CD8-positive, alpha-beta T cell (primary cell): ENCODE measurements at regions of chr22 and their contacts with region 1.

Region 1: DNA sequence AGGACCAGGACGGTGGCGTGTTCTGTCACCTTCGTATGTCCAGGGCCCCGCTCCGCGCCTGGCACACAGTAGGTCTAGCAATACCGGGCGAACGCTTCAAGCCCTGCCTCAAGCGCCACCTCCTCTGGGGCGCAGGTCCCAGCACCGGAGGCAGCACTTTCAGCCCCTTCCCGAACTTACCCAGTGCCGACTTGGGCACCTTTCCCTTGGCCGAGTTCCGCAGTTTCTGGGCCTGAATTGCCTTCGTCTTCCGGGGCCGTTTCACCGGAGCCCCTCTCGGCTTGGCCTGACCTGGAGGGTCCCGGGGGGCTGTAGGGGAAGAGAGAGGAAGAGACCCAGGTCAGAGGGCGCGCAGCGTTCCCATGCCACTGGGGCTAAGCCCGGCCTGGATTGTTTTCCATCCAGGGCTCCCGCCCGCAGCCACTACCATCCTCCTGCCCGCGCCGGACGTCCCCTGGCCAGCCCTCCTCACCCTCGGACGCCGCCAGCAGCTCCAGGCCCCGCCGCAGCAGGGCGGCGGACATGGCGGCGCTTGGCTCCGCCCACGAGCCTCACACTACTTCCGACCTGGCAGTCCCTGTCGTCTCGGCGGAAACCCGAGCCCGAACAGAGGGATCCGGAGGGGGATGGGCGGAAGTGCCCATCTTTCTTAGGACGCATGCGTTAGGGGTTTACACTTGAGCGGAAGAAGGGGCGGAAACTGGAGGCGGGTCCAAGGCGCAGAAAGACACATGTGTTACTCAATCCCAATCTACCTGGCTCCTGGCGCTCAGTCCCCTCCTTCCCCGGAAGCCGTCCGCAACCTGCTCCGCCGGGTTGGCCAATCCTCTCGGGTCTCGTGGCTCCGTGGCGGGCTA is at the start of gene RPS19BP1:
- DNase-seq: peak; percentile 98 to 100 (median 99)
- ATAC-seq: peak; percentile 84
- H3K4me3 ChIP-seq: peak within 1 kb of the TSS; percentile 83 to 99
- H3K4me3 Mint-ChIP-seq: peak within 1 kb of the TSS; percentile 97
- H3K27ac ChIP-seq: peak within 1 kb of the TSS; percentile 78 to 97
- H3K27ac Mint-ChIP-seq: peak within 1 kb of the TSS; percentile 95
- H3K4me1 ChIP-seq: peaks cover 55% of the 10 kb centered on the region
- H3K4me1 Mint-ChIP-seq: peaks cover 56% of the 10 kb centered on the region
- H3K27me3 ChIP-seq: no peaks in the 10 kb centered on the region
- H3K27me3 Mint-ChIP-seq: no peaks in the 10 kb centered on the region
- CTCF ChIP-seq: no peak
- total RNA-seq, gene RPS19BP1: 69.0 to 70.5 TPM

Region 2: DNA sequence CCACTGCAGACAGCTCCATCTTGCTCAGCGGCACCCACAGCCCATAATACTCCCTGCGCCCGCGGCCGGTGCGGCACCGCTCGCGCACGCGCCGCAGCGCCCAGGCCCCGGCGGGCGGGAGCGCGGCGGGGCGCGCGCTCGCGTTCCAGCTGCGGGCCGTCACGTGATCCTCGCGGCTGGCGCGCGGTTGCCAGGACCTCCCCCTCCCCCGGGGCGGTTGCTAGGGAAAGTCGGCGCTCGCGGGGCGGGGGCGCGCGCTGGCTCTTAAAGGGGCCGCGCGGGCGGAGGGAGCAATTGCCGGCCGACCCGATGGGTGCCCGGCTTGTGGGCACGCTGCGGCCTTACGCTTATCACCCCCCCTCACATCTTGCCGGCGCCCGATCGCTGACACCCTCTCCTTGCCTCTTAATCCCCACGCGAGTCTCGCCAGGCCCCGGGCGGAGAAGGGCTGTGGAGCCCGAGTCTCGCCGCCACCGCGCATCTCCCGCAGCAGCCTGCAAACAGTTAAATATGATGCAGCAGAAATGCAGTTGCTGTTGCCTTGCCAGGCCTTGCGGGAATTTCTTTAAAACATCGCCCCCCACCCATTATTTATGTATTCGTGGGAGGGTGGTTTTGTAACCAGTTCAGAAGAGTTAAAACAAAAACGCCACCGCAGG is 660.1 kb before region 1 on chr22 and contains the start of gene CBX6:
- CTCF ChIA-PET with region 1: no interaction called
- POLR2A ChIA-PET with region 1: no interaction called
- intact Hi-C with region 1: loop called (anchors 2 to 5 kb)
- DNase-seq: peak; percentile 90 to 98 (median 96)
- ATAC-seq: peak; percentile 70
- H3K4me3 ChIP-seq: peak within 1 kb of the TSS; percentile 91 to 98
- H3K4me3 Mint-ChIP-seq: peak within 1 kb of the TSS; percentile 89
- H3K27ac ChIP-seq: peak within 1 kb of the TSS; percentile 62 to 65
- H3K27ac Mint-ChIP-seq: peak within 1 kb of the TSS; percentile 81
- H3K4me1 ChIP-seq: peaks cover 41% of the 10 kb centered on the region
- H3K4me1 Mint-ChIP-seq: peaks cover 44% of the 10 kb centered on the region
- H3K27me3 ChIP-seq: no peaks in the 10 kb centered on the region
- H3K27me3 Mint-ChIP-seq: no peaks in the 10 kb centered on the region
- CTCF ChIP-seq: no peak
- total RNA-seq, gene CBX6: 36.0 to 39.5 TPM

Region 3: GRCh38 chr22:39230261-39231196 is 301.9 kb before region 1 on chr22:
- CTCF ChIA-PET with region 1: no interaction called
- POLR2A ChIA-PET with region 1: no interaction called
- intact Hi-C with region 1: no loop called
- DNase-seq: no peak
- ATAC-seq: no peak
- H3K4me3 ChIP-seq: no peak overlapping the region
- H3K4me3 Mint-ChIP-seq: no peak overlapping the region
- H3K27ac ChIP-seq: no peak overlapping the region
- H3K27ac Mint-ChIP-seq: no peak overlapping the region
- H3K4me1 ChIP-seq: peaks cover 16% of the 10 kb centered on the region
- H3K4me1 Mint-ChIP-seq: peaks cover 19% of the 10 kb centered on the region
- H3K27me3 ChIP-seq: peaks cover 0 to 10% of the 10 kb centered on the region in 2 experiments
- H3K27me3 Mint-ChIP-seq: peaks cover 13% of the 10 kb centered on the region
- CTCF ChIP-seq: no peak

Region 4: GRCh38 chr22:39395936-39396796 is 136.3 kb before region 1 on chr22:
- CTCF ChIA-PET with region 1: interaction called, 9 read pairs
- POLR2A ChIA-PET with region 1: interaction called, 5 read pairs
- intact Hi-C with region 1: loop called (anchors 1 kb)
- DNase-seq: no peak
- ATAC-seq: no peak
- H3K4me3 ChIP-seq: no peak overlapping the region
- H3K4me3 Mint-ChIP-seq: no peak overlapping the region
- H3K27ac ChIP-seq: no peak overlapping the region
- H3K27ac Mint-ChIP-seq: no peak overlapping the region
- H3K4me1 ChIP-seq: peaks cover 10% of the 10 kb centered on the region
- H3K4me1 Mint-ChIP-seq: peaks cover 9% of the 10 kb centered on the region
- H3K27me3 ChIP-seq: no peaks in the 10 kb centered on the region
- H3K27me3 Mint-ChIP-seq: no peaks in the 10 kb centered on the region
- CTCF ChIP-seq: no peak

Region 5: GRCh38 chr22:39514373-39514973 is 18.0 kb before region 1 on chr22:
- CTCF ChIA-PET with region 1: interaction called, 65 read pairs
- POLR2A ChIA-PET with region 1: interaction called, 45 read pairs
- intact Hi-C with region 1: no loop called
- DNase-seq: peak in 6 of 9 experiments; percentile 36 to 61 (median 54)
- ATAC-seq: peak; percentile 55
- H3K4me3 ChIP-seq: no peak overlapping the region
- H3K4me3 Mint-ChIP-seq: no peak overlapping the region
- H3K27ac ChIP-seq: no peak overlapping the region
- H3K27ac Mint-ChIP-seq: no peak overlapping the region
- H3K4me1 ChIP-seq: peaks cover 8% of the 10 kb centered on the region
- H3K4me1 Mint-ChIP-seq: peaks cover 20% of the 10 kb centered on the region
- H3K27me3 ChIP-seq: no peaks in the 10 kb centered on the region
- H3K27me3 Mint-ChIP-seq: no peaks in the 10 kb centered on the region
- CTCF ChIP-seq: peak; percentile 67

Region 6: GRCh38 chr22:39900306-39901227 is 368.1 kb after region 1 on chr22 and contains the start of gene GRAP2:
- CTCF ChIA-PET with region 1: interaction called, 14 read pairs
- POLR2A ChIA-PET with region 1: no interaction called
- intact Hi-C with region 1: loop called (anchors 10 kb)
- DNase-seq: peak; percentile 49 to 93 (median 74)
- ATAC-seq: peak; percentile 92
- H3K4me3 ChIP-seq: peak within 1 kb of the TSS; percentile 77 to 80
- H3K4me3 Mint-ChIP-seq: peak within 1 kb of the TSS; percentile 97
- H3K27ac ChIP-seq: peak within 1 kb of the TSS; percentile 71 to 80
- H3K27ac Mint-ChIP-seq: peak within 1 kb of the TSS; percentile 91
- H3K4me1 ChIP-seq: peaks cover 42% of the 10 kb centered on the region
- H3K4me1 Mint-ChIP-seq: peaks cover 27% of the 10 kb centered on the region
- H3K27me3 ChIP-seq: no peaks in the 10 kb centered on the region
- H3K27me3 Mint-ChIP-seq: no peaks in the 10 kb centered on the region
- CTCF ChIP-seq: no peak
- total RNA-seq, gene GRAP2: 105 TPM

Region 7: GRCh38 chr22:40036591-40037225 is 504.3 kb after region 1 on chr22:
- CTCF ChIA-PET with region 1: interaction called, 132 read pairs
- POLR2A ChIA-PET with region 1: no interaction called
- intact Hi-C with region 1: loop called (anchors 1 to 2 kb)
- DNase-seq: peak in 8 of 9 experiments; percentile 31 to 71 (median 46)
- ATAC-seq: peak; percentile 67
- H3K4me3 ChIP-seq: no peak overlapping the region
- H3K4me3 Mint-ChIP-seq: no peak overlapping the region
- H3K27ac ChIP-seq: no peak overlapping the region
- H3K27ac Mint-ChIP-seq: no peak overlapping the region
- H3K4me1 ChIP-seq: no peaks in the 10 kb centered on the region
- H3K4me1 Mint-ChIP-seq: peaks cover 10% of the 10 kb centered on the region
- H3K27me3 ChIP-seq: no peaks in the 10 kb centered on the region
- H3K27me3 Mint-ChIP-seq: peaks cover 21% of the 10 kb centered on the region
- CTCF ChIP-seq: peak; percentile 61

Region 8: DNA sequence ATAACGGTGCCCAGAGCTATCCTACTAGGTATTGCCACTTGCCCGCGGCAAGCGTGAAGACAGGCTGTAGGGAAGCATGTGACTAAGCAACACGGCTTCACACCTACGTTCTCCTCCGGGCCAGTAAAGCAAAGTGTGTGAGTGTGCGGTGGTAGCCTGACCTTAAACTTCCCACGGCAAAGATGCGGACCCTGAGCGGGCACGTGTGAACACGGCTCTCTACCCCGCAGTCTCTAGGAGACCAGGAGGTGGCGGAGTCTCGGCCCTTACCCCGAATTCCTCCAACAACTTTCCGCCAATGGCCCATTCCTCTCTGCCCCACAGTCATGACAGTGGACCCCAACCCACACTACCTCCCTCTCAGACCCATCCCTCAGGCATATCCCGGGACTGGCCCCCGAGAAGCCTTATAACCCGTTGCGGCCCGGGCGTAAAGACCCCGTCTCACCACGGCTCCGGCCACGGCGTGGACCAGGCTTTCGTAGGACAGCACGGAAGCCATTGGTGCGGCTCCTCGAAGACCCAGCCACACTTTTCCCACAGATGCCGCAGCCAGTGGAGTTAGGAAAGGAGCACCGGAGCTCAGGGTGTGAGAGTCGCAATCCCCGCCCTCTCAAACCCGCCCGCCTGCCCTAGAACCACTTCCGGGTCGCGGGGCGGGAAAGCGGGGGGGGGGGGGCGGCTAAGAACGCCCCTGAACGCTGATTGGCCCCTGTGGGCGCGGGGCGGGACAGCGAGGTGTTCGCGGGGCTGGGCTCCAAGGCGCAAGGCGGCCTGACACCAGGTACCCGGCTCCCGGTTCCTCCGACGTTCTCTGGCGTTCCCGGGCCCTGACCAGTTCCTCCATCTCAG is 1286.5 kb after region 1 on chr22 and contains the start of gene SLC25A17:
- CTCF ChIA-PET with region 1: no interaction called
- POLR2A ChIA-PET with region 1: no interaction called
- intact Hi-C with region 1: loop called in 1 of 2 experiments (anchors 2 kb)
- DNase-seq: peak; percentile 72 to 93 (median 88)
- ATAC-seq: peak; percentile 88
- H3K4me3 ChIP-seq: peak within 1 kb of the TSS; percentile 87 to 91
- H3K4me3 Mint-ChIP-seq: peak within 1 kb of the TSS; percentile 96
- H3K27ac ChIP-seq: peak within 1 kb of the TSS; percentile 69 to 81
- H3K27ac Mint-ChIP-seq: peak within 1 kb of the TSS; percentile 88
- H3K4me1 ChIP-seq: peaks cover 18% of the 10 kb centered on the region
- H3K4me1 Mint-ChIP-seq: peaks cover 41% of the 10 kb centered on the region
- H3K27me3 ChIP-seq: no peaks in the 10 kb centered on the region
- H3K27me3 Mint-ChIP-seq: no peaks in the 10 kb centered on the region
- CTCF ChIP-seq: no peak
- total RNA-seq, gene SLC25A17: 3.2 to 4.0 TPM